ENCODE measurements at regions of chr3 and their contacts with region 1.

Region 1: GRCh38 chr3:152205097-152205593 is 63.6 kb upstream of the MBNL1 start:
- DNase-seq: no peak
- H3K4me3 Mint-ChIP-seq: peak overlapping the region; percentile 78
- H3K27ac Mint-ChIP-seq: peak overlapping the region; percentile 80
- H3K4me1 Mint-ChIP-seq: peaks cover 65% of the 10 kb centered on the region
- H3K27me3 Mint-ChIP-seq: no peaks in the 10 kb centered on the region

Region 2: GRCh38 chr3:152177757-152178156 is 27.4 kb before region 1 on chr3:
- CTCF ChIA-PET with region 1: no interaction called
- POLR2A ChIA-PET with region 1: no interaction called
- DNase-seq: no peak
- H3K4me3 Mint-ChIP-seq: no peak overlapping the region
- H3K27ac Mint-ChIP-seq: no peak overlapping the region
- H3K4me1 Mint-ChIP-seq: peaks cover 13% of the 10 kb centered on the region
- H3K27me3 Mint-ChIP-seq: peaks cover 2% of the 10 kb centered on the region

Region 3: GRCh38 chr3:152193673-152194267 is 11.4 kb before region 1 on chr3:
- CTCF ChIA-PET with region 1: interaction called, 5 read pairs
- POLR2A ChIA-PET with region 1: interaction called, 24 read pairs
- DNase-seq: peak; percentile 48
- H3K4me3 Mint-ChIP-seq: peak overlapping the region; percentile 75
- H3K27ac Mint-ChIP-seq: peak overlapping the region; percentile 87
- H3K4me1 Mint-ChIP-seq: peaks cover 80% of the 10 kb centered on the region
- H3K27me3 Mint-ChIP-seq: no peaks in the 10 kb centered on the region

Region 4: DNA sequence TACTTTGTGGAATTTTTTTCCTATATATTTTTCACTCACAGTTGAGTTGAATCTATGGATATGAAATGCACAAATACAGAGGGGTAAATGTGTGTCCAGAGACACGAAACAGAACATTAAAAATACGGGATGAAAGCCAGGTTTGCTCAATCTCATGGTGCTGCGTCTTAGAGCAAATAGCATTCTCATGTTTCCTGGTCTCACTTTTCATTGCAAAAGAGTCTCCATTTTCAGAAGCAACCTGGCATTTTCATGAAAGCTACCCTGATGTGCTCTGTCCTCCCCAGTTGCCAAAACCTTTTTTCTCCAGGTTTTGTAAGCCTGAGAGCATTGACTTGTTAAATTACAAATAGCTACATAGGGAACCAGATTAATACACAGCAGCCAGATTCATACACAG is 14.1 kb after region 1 on chr3:
- CTCF ChIA-PET with region 1: no interaction called
- POLR2A ChIA-PET with region 1: interaction called, 20 read pairs
- DNase-seq: no peak
- H3K4me3 Mint-ChIP-seq: peak overlapping the region; percentile 31
- H3K27ac Mint-ChIP-seq: no peak overlapping the region
- H3K4me1 Mint-ChIP-seq: peaks cover 53% of the 10 kb centered on the region
- H3K27me3 Mint-ChIP-seq: no peaks in the 10 kb centered on the region

Region 5: DNA sequence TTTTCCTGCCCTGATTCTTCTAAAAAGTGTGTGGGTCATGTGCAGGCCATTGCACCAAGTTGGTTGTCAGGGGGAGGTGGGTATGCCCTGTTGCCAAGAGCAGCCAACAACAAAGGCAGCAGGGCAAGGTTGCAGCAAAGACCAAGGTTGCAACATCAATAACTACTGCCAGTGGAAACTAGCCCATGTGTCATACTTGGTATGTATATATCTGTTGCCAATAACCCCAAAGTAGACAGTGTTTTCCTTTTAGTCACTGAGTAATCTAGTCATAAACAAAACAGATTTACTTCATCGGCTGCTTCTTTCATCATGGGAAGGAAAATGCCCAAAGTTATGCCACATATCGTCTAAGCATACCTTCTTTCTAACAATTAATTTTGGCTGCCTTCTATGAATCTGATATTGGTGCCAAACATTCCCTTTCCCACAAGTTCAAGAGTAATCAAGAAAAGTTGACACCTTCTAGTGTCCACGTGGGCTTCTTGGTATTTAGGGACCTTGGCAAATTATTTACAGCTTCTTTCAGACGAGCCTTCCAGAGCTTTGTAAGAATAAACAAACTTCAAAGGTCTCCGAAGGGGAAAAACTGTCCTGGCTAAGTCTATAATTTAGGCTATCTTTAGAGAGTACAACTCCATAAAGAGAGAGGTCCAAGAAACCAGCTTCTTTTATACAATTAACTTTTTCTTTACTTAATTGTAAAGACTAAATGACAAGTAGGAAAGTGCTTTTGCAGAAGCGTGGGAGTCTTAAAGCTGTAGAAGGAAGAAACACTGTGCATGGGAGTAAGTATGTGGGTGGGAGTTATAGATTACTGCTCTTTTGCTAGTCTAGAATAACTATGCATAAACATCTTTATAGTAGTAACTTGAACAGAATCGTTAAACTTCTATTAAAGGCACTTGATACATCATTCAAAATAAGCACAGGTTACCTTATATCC is 53.6 kb after region 1 on chr3:
- CTCF ChIA-PET with region 1: no interaction called
- POLR2A ChIA-PET with region 1: interaction called, 38 read pairs
- DNase-seq: peak; percentile 67
- H3K4me3 Mint-ChIP-seq: peak overlapping the region; percentile 62
- H3K27ac Mint-ChIP-seq: peak overlapping the region; percentile 91
- H3K4me1 Mint-ChIP-seq: peaks cover 78% of the 10 kb centered on the region
- H3K27me3 Mint-ChIP-seq: no peaks in the 10 kb centered on the region

Measured in activated CD4-positive, alpha-beta memory T cell treated with anti-CD3 and anti-CD28 coated beads, Interleukin-2, amount 10 ng/mL, durations not matched to agents 7 days and 5 days (primary cell).